T-cell (primary cell): ENCODE measurements at regions of chr20 and their contacts with region 1.

Region 1: DNA sequence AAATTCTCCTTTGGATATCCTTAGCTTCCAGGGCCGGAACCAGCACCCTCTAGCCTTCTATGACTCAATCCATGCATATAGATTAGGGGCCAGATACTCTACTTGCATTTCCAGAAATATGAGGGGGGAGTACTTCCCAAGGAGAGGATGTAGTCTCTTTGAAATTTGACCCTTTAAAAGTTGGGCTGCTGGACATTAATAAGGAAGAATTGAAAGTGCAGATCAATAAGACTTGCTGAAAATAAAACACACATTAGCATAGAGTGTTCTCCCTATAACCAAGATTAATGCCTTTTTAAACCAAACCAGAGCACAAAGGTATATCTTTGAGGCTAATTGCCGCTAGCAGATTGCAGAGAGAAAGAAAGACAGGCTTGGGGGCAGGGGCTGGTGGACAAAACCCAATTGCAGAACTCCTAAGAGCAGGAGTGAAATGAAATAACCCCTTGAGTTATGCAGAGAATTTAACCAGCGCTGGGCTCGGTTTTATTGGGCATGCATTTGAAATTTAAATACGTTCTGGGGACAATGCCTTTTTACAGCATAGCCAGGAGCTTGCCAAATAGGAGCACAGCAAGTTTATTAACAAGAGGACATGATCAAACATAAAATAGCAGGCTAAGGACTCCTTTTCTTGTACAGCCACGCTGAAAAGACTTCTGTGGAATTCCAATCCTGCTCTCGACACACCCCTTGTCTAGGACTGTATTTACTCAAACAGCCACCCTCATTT is 108.2 kb upstream of the SALL4 start:
- DNase-seq: no peak
- ATAC-seq: no peak
- H3K4me3 ChIP-seq: no peak overlapping the region
- H3K4me3 Mint-ChIP-seq: no peak overlapping the region
- H3K27ac ChIP-seq: no peak overlapping the region
- H3K27ac Mint-ChIP-seq: no peak overlapping the region
- H3K4me1 ChIP-seq: no peaks in the 10 kb centered on the region
- H3K4me1 Mint-ChIP-seq: no peaks in the 10 kb centered on the region
- H3K27me3 ChIP-seq: peaks cover 0 to 8% of the 10 kb centered on the region in 2 experiments
- H3K27me3 Mint-ChIP-seq: peaks cover 12 to 28% of the 10 kb centered on the region in 2 donors

Region 2: GRCh38 chr20:51687062-51687461 is 223.4 kb before region 1 on chr20:
- CTCF ChIA-PET with region 1: no interaction called
- POLR2A ChIA-PET with region 1: no interaction called
- DNase-seq: no peak
- ATAC-seq: no peak
- H3K4me3 ChIP-seq: no peak overlapping the region
- H3K4me3 Mint-ChIP-seq: no peak overlapping the region
- H3K27ac ChIP-seq: no peak overlapping the region
- H3K27ac Mint-ChIP-seq: no peak overlapping the region
- H3K4me1 ChIP-seq: no peaks in the 10 kb centered on the region
- H3K4me1 Mint-ChIP-seq: no peaks in the 10 kb centered on the region
- H3K27me3 ChIP-seq: peaks cover 0 to 3% of the 10 kb centered on the region in 2 experiments
- H3K27me3 Mint-ChIP-seq: peaks cover 0 to 7% of the 10 kb centered on the region in 2 donors

Region 3: DNA sequence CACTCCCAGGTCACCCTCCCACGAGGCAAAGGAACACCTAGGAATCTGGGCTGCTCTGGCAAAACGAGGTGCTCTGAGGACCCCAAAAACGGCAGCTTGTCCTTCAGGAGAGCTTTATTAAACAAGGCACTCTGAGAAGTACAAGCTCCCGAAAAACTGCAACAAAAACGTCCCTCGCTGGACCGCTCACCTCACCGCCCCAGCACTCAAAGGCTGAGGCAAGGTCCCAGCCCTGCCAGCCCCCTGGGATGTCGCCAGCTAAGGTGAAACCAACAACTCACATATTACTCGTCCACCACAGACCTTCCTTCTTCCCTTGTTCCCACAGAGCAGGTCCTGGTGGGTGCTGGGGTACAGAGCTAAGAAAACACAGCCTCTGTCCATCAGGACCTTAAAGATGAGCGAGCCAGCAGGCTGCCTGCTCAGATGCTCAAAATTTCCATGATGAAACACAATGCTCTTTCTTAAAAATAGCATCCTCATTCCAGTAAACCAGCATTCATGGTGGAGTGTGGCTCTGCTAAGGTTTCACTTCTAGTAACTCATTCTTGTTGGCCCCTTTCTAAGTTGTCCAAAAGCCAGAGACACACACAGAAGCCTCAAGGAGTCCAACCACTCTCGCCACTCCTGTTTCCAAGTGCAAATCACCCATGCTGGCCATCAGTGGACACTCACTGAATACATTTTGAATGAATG is 178.2 kb before region 1 on chr20:
- CTCF ChIA-PET with region 1: interaction called in 1 of 2 experiments, 11 read pairs
- POLR2A ChIA-PET with region 1: no interaction called
- DNase-seq: no peak
- ATAC-seq: no peak
- H3K4me3 ChIP-seq: no peak overlapping the region
- H3K4me3 Mint-ChIP-seq: no peak overlapping the region
- H3K27ac ChIP-seq: no peak overlapping the region
- H3K27ac Mint-ChIP-seq: no peak overlapping the region
- H3K4me1 ChIP-seq: no peaks in the 10 kb centered on the region
- H3K4me1 Mint-ChIP-seq: no peaks in the 10 kb centered on the region
- H3K27me3 ChIP-seq: peaks cover 0 to 13% of the 10 kb centered on the region in 2 experiments
- H3K27me3 Mint-ChIP-seq: peaks cover 0 to 4% of the 10 kb centered on the region in 2 donors